Pancreas (tissue), 10 donors: ENCODE measurements at regions of chr7 and their contacts with region 1.

Region 1: GRCh38 chr7:106176414-106177299 is 64.5 kb upstream of the SYPL1 start:
- DNase-seq: peak; percentile 64 to 92 (median 84)
- ATAC-seq: peak; percentile 88 to 95 (median 93)
- H3K4me3 ChIP-seq: no peak overlapping the region
- H3K27ac ChIP-seq: no peak overlapping the region
- H3K4me1 ChIP-seq: peaks cover 0 to 5% (median 0%) of the 10 kb centered on the region in 3 donors
- H3K27me3 ChIP-seq: no peaks in the 10 kb centered on the region
- CTCF ChIP-seq: peak; percentile 83 to 95 (median 88)

Region 2: DNA sequence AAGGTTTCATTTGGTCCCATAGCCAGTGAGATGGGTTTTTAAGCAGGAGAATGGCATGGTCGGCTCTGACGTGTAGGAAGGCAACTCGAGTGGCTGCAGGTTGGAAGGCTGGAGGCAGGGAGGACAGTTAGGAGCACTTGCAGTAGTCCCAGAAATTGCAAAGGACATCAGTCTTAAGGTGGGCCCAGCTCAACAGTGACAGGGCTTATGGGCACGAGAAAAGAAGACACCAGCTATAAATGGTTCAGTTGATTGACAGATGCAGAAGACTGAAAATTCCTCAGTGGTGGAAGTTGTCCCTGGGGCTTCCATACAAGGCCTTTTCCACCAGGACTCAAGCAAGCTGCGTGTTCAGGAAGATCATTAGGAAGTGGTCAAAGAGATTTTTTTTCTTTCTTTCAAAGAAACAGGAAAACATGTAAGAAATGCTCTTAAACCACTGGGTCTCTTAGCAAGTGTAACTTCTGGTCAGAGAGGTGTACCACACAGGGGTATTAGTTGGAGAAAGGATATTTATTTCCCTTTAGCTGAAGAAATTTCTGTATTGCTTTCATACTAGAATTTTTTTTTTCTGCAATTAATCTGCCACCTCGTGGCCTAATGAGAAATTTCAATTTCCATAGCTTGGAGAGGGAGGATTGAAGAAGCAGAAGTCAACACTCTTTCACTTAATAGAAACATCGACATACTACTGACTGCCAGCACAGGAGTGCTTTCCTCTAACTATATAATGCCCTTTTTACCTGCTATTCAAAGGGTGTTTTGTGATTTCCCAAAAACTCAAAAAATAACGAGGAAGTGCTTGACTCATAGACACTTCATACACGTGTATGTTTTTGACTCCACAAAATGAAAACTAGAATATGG is 285.6 kb after region 1 on chr7:
- intact Hi-C with region 1: loop called (anchors 5 to 10 kb)
- DNase-seq: no peak
- ATAC-seq: peak; percentile 46 to 81 (median 74)
- H3K4me3 ChIP-seq: no peak overlapping the region
- H3K27ac ChIP-seq: peak overlapping the region in 2 of 4 donors; percentile 11 to 25
- H3K4me1 ChIP-seq: peaks cover 0 to 6% (median 0%) of the 10 kb centered on the region in 3 donors
- H3K27me3 ChIP-seq: no peaks in the 10 kb centered on the region
- CTCF ChIP-seq: peak in 3 of 4 donors; percentile 20 to 66 (median 63)

Region 3: GRCh38 chr7:106736508-106737201 is 560.0 kb after region 1 on chr7:
- intact Hi-C with region 1: loop called in 1 of 3 experiments (anchors 10 kb)
- DNase-seq: peak in 3 of 6 donors; percentile 25 to 51 (median 37)
- ATAC-seq: peak; percentile 95 to 99 (median 98)
- H3K4me3 ChIP-seq: no peak overlapping the region
- H3K27ac ChIP-seq: peak overlapping the region in 1 of 4 donors; percentile 38
- H3K4me1 ChIP-seq: peaks cover 0 to 2% (median 0%) of the 10 kb centered on the region in 3 donors
- H3K27me3 ChIP-seq: no peaks in the 10 kb centered on the region
- CTCF ChIP-seq: peak; percentile 14 to 53 (median 40)